HEK293 (cell line): ENCODE measurements at regions of chr7 and their contacts with region 1.

Region 1: DNA sequence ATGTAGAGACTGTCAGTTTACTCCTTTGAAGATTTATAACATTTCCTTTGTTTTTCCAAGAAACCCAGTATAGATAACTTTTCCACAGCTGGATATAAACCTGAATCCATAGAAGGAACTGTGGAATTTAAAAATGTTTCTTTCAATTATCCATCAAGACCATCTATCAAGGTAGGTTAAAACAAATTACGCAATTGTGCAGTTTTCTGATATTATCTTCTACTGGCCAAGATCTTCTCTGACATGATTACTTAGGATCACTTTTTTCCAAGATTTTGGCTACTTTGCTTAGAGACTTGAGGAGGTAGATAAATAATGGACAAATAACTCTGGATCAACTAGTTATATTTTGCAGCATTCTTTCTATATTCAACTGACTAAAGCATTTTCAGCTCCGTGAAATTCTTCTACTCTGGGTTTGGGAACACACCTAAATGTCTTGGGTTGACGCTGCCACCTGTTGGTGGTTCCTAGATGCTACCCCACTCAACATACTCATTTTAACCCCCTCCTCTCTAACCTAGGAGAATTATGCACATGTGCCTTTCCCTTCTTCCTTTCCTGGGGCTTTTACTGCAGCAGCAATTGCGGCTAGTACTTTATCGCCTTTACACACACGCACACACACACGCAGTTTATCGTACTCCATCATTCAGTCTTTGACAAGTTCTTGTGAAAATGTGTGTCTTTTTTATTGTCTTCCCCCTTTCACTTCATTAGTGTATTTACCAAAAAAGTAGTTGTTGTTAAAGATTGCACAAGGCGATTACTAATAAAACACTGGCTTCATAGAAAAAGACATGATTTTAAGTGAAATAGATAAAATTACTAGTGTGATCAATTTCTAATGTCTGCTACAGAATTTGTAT is 32.7 kb downstream of the ABCB5 start:
- H3K4me3 ChIP-seq: no peak overlapping the region
- H3K27ac ChIP-seq: no peak overlapping the region
- H3K4me1 ChIP-seq: no peaks in the 10 kb centered on the region
- CTCF ChIP-seq: peak; percentile 38; the same call in 1 of the 2 replicates

Region 2: GRCh38 chr7:19713676-19714075 is 934.5 kb before region 1 on chr7:
- CTCF ChIA-PET with region 1: interaction called, 11 read pairs
- POLR2A ChIA-PET with region 1: no interaction called
- H3K4me3 ChIP-seq: no peak overlapping the region
- H3K27ac ChIP-seq: no peak overlapping the region
- H3K4me1 ChIP-seq: no peaks in the 10 kb centered on the region
- CTCF ChIP-seq: no peak

Region 3: GRCh38 chr7:20316706-20317105 is 331.4 kb before region 1 on chr7:
- CTCF ChIA-PET with region 1: no interaction called
- POLR2A ChIA-PET with region 1: no interaction called
- H3K4me3 ChIP-seq: no peak overlapping the region
- H3K27ac ChIP-seq: no peak overlapping the region
- H3K4me1 ChIP-seq: no peaks in the 10 kb centered on the region
- CTCF ChIP-seq: no peak

Region 4: GRCh38 chr7:20661884-20662283 is 13.7 kb after region 1 on chr7:
- CTCF ChIA-PET with region 1: interaction called, 17 read pairs
- POLR2A ChIA-PET with region 1: no interaction called
- H3K4me3 ChIP-seq: no peak overlapping the region
- H3K27ac ChIP-seq: no peak overlapping the region
- H3K4me1 ChIP-seq: no peaks in the 10 kb centered on the region
- CTCF ChIP-seq: no peak